ENCODE measurements at regions of chr1 and their contacts with region 1.

Region 1: GRCh38 chr1:43529206-43529731 is 1.4 kb upstream of the PTPRF start:
- DNase-seq: peak; percentile 89
- ATAC-seq: peak; percentile 45
- H3K4me3 Mint-ChIP-seq: peak overlapping the region; percentile 91
- H3K27ac Mint-ChIP-seq: no peak overlapping the region
- H3K4me1 Mint-ChIP-seq: peaks cover 36% of the 10 kb centered on the region
- H3K27me3 Mint-ChIP-seq: peaks cover 10% of the 10 kb centered on the region
- CTCF ChIP-seq: peak; percentile 85

Region 2: GRCh38 chr1:43545695-43546387 is 16.6 kb after region 1 on chr1:
- CTCF ChIA-PET with region 1: interaction called, 23 read pairs
- POLR2A ChIA-PET with region 1: interaction called, 24 read pairs
- DNase-seq: peak; percentile 98
- ATAC-seq: peak; percentile 71
- H3K4me3 Mint-ChIP-seq: peak overlapping the region; percentile 51
- H3K27ac Mint-ChIP-seq: peak overlapping the region; percentile 94
- H3K4me1 Mint-ChIP-seq: peaks cover 70% of the 10 kb centered on the region
- H3K27me3 Mint-ChIP-seq: no peaks in the 10 kb centered on the region
- CTCF ChIP-seq: no peak

Region 3: GRCh38 chr1:43666608-43667007 is 137.3 kb after region 1 on chr1:
- CTCF ChIA-PET with region 1: no interaction called
- POLR2A ChIA-PET with region 1: no interaction called
- DNase-seq: no peak
- ATAC-seq: no peak
- H3K4me3 Mint-ChIP-seq: no peak overlapping the region
- H3K27ac Mint-ChIP-seq: no peak overlapping the region
- H3K4me1 Mint-ChIP-seq: peaks cover 1% of the 10 kb centered on the region
- H3K27me3 Mint-ChIP-seq: no peaks in the 10 kb centered on the region
- CTCF ChIP-seq: no peak